ENCODE measurements at regions of chr5 and their contacts with region 1.

Region 1: GRCh38 chr5:43484106-43484849 is 613 bp upstream of the TMEM267 start:
- DNase-seq: peak; percentile 88
- H3K4me3 ChIP-seq: peak overlapping the region; percentile 57 to 97 (median 64)
- H3K27ac ChIP-seq: peak overlapping the region; percentile 77
- H3K4me1 ChIP-seq: peaks cover 14% of the 10 kb centered on the region
- H3K27me3 ChIP-seq: no peaks in the 10 kb centered on the region
- CTCF ChIP-seq: peak; percentile 63 to 82
- POLR2A ChIP-seq: no peak

Region 2: DNA sequence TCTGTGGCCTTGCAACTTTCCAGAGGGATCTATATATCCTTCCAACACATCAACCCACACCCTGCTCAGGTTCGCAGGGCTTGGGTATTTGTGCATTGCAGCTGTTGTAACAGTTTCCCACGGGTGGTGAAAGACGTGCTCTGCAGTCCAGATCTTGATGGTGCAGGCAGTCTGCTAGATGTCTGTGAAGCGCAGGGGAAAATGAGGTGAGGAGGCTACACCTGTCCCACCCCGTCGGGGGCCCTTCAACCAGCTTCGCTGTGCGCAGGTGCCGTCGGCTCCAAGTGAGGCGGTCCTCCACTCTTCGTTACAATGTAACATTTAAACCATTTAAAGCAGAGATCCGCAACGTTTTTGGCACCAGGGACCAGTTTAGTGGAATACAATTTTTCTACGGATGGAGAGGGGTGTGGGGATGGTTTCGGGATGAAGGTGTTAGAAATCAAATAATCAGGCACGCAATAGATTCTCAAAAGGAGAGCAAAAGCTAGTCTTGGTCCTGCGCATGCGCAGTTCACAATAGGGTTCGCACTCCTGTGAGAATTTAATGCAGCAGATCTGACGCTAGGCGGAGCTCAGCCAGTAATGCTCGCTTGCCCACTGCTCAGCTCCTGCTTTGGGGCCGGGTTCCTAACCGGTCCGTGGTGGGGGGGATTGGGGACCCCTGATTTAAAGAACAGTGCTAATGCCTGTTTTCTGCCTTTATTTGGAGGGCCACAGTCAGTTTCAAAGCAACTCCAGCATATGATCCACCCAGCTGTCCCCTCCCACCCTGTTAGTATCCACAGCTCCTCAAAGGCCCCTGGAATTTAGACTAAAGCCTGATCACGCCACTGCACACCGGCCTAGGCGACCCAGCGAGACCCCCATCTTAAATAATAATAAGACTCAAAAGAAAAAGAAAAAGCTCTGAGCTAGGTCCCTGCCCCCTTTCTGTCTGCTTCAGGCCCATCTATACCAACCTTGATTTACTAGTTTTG is 575.5 kb before region 1 on chr5:
- CTCF ChIA-PET with region 1: interaction called, 8 read pairs
- POLR2A ChIA-PET with region 1: no interaction called
- dilution Hi-C with region 1: no loop called
- intact Hi-C with region 1: loop called (anchors 10 kb)
- DNase-seq: peak; percentile 87
- H3K4me3 ChIP-seq: peak overlapping the region; percentile 31 to 75 (median 41)
- H3K27ac ChIP-seq: no peak overlapping the region
- H3K4me1 ChIP-seq: peaks cover 5% of the 10 kb centered on the region
- H3K27me3 ChIP-seq: peaks cover 23 to 34% of the 10 kb centered on the region in 2 experiments
- CTCF ChIP-seq: peak; percentile 75 to 78
- POLR2A ChIP-seq: no peak

Region 3: DNA sequence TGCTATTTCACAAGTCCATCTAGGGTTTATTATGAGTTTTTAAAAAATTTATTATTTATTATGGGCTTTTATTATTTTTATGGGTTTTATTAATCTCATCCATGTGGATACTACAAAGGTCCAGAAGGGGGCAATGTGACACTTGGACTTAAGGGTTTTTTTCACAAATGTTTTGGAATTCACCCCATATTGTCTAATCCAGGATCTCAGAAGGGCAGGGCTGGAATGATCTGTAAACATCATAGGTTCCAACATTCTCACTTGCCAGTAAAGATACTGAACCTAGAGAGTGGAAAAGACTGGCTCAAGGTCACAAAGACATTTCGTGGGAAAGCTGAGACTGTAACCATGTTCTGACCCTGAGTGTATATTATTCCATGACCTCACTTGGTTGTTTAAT is 256.6 kb before region 1 on chr5:
- CTCF ChIA-PET with region 1: interaction called, 8 read pairs
- POLR2A ChIA-PET with region 1: no interaction called
- dilution Hi-C with region 1: no loop called
- intact Hi-C with region 1: loop called (anchors 1 kb)
- DNase-seq: peak; percentile 44
- H3K4me3 ChIP-seq: no peak overlapping the region
- H3K27ac ChIP-seq: no peak overlapping the region
- H3K4me1 ChIP-seq: no peaks in the 10 kb centered on the region
- H3K27me3 ChIP-seq: peaks cover 2% of the 10 kb centered on the region in 2 experiments
- CTCF ChIP-seq: peak; percentile 28 to 41
- POLR2A ChIP-seq: no peak

Region 4: DNA sequence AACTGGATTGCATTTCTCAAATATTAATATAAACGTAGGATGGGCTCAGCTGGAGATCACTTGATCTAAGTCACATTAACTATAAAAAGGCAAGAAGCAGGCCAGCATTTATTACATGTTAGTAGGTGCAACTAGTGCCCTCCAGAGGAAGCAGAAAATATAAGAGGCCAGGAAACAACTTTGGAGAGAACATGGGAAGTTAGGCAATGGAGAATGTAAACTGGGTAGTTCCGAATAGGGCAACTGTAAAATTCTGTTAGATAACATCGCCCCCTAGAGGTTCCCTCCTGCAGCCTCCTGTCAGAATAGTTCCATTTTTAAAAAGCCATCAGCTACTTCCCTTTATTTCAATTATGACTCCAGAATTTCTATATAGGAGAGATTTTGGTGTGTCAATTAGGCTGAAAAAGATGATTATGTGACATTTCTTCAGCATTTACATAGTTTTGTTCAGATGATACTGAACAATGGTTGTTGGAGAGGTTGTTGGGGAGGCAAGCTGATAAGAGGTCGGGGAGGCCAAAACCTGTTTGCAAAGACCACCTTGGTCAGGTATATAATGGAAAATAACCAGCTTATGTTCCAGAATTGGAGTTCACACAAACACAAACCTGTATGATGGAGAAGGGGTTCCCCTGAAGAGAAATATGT is 94.5 kb before region 1 on chr5:
- CTCF ChIA-PET with region 1: interaction called, 30 read pairs
- POLR2A ChIA-PET with region 1: no interaction called
- dilution Hi-C with region 1: no loop called
- intact Hi-C with region 1: loop called (anchors 2 kb)
- DNase-seq: peak; percentile 81
- H3K4me3 ChIP-seq: no peak overlapping the region
- H3K27ac ChIP-seq: no peak overlapping the region
- H3K4me1 ChIP-seq: no peaks in the 10 kb centered on the region
- H3K27me3 ChIP-seq: no peaks in the 10 kb centered on the region
- CTCF ChIP-seq: peak; percentile 72 to 73
- POLR2A ChIP-seq: no peak

Region 5: DNA sequence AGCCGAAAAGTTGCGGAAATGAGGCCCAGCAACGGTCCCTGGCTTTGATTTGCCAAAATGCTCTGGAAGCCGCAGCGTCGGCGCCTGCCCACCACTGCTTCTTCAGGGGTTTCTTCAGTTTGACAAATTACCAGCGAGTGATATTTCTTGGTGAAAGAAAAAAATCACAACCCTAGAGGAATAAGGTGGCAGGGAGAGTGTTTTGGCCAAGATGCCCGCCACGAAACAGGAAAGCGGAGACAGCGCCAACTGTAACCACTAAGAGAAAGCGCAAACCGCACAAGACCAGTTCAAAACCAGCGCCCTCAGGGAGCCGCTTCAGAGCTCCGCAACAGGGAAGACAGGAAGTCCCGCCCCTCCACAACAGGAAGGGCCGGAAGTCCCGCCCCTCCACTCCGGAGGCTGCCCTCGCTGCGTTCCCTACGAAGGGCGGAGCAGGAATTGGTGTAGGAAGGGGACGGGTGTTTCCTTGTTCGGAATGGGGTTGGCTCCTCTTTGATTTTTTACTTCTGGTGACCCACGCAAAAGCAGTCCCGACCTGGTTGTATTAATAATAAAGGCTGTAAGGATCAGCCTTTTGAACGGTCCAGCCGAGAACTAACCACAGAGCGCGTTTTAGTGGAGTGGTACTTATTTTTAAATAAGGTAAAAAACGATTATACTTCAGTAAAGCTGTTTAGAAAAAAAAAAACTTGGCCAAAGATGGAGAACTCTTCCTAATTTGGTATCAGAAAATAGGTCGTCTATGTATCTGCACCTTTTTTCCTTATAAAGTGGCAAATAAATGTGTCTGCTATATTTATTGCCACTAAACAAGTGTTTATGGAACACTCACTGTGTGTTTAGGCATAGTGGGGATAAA is 30.8 kb after region 1 on chr5 and contains the start of gene C5orf34:
- CTCF ChIA-PET with region 1: interaction called, 26 read pairs
- POLR2A ChIA-PET with region 1: interaction called, 9 read pairs
- dilution Hi-C with region 1: no loop called
- intact Hi-C with region 1: loop called (anchors 1 kb)
- DNase-seq: peak; percentile 97
- H3K4me3 ChIP-seq: peak within 1 kb of the TSS; percentile 68 to 93 (median 89)
- H3K27ac ChIP-seq: peak within 1 kb of the TSS; percentile 92
- H3K4me1 ChIP-seq: peaks cover 11% of the 10 kb centered on the region
- H3K27me3 ChIP-seq: no peaks in the 10 kb centered on the region
- CTCF ChIP-seq: no peak
- POLR2A ChIP-seq: peak; percentile 93
- total RNA-seq, gene C5orf34: 5.0 and 6.5 TPM in 2 replicates

Region 6: DNA sequence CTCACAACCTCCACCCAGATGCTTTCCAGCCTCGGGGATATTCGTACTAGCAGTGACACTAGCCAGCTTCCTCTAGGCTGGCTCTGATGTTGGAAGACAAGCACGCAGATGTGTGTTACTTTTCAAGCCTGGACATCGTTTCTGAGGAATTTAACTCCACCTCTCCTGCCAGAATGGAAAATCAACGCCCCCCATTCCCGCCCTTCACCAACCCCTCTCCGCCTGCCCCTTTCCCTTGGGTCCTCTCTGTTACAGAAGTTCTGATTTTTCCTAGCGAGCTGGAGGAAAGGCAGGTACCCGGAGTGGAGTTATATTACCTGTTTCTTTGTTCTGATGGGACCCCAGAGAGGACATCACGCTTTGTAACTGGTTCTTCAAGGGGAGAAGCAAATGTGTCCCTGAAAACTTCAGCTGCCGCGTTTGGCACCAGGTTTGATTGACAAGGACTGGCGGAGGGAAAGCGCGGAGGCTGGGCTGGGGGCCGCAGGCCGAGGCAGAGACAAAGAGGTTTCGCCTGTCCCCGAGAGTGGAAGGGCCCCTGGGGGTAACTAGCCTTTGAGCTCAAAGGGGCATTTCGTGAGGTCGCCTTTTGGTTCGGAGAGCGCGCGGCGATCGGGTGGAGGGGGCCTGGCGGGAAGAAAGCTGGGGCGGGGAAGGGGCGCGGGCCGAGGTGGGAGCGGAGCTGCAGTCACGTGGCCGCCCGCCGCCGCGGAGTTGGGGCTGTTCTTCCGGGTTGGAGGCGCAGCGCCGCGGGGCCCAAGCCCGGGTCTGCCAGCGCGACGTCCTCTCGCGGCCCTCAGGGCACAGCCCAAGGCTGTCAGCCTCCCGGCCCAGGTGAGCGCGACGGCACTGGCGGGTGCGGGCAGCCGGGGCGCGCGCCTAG is 118.4 kb after region 1 on chr5 and contains the start of gene NNT:
- CTCF ChIA-PET with region 1: interaction called, 6 read pairs
- POLR2A ChIA-PET with region 1: no interaction called
- dilution Hi-C with region 1: no loop called
- intact Hi-C with region 1: loop called (anchors 1 kb)
- DNase-seq: peak; percentile 70
- H3K4me3 ChIP-seq: peak within 1 kb of the TSS; percentile 53 to 86 (median 80)
- H3K27ac ChIP-seq: peak within 1 kb of the TSS; percentile 88
- H3K4me1 ChIP-seq: peaks cover 19% of the 10 kb centered on the region
- H3K27me3 ChIP-seq: no peaks in the 10 kb centered on the region
- CTCF ChIP-seq: no peak
- POLR2A ChIP-seq: no peak
- total RNA-seq, gene NNT: 75.6 and 82.5 TPM in 2 replicates

Measured in endothelial cell of umbilical vein (primary cell).